ENCODE measurements at regions of chr3 and their contacts with region 1.

Region 1: GRCh38 chr3:157136647-157137387 is 23.1 kb downstream of the CCNL1 start:
- DNase-seq: no peak
- ATAC-seq: no peak
- H3K4me3 Mint-ChIP-seq: no peak overlapping the region
- H3K27ac Mint-ChIP-seq: peak overlapping the region; percentile 31
- H3K4me1 Mint-ChIP-seq: peaks cover 42% of the 10 kb centered on the region
- H3K27me3 Mint-ChIP-seq: no peaks in the 10 kb centered on the region
- CTCF ChIP-seq: no peak

Region 2: DNA sequence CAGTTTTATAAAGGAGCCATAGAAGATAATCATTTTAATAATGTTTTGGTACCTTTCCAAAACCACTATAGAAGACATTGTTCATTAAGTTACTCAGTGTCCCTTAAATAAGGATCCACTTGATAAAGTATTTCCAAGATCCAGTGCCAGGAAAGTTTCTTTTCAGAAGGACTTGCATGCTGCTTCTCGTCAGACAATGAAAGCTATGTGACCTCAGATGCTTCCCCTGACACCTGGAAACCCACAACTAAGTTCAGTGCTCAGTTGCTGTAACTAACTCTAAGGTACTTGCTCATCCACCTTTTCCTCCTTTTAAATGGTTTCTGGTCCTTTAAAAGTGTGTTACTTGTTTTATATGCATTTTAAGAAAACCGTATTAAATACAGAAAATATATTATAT is 589.2 kb before region 1 on chr3:
- CTCF ChIA-PET with region 1: interaction called, 18 read pairs
- POLR2A ChIA-PET with region 1: no interaction called
- intact Hi-C with region 1: no loop called
- DNase-seq: no peak
- ATAC-seq: no peak
- H3K4me3 Mint-ChIP-seq: no peak overlapping the region
- H3K27ac Mint-ChIP-seq: no peak overlapping the region
- H3K4me1 Mint-ChIP-seq: peaks cover 49% of the 10 kb centered on the region
- H3K27me3 Mint-ChIP-seq: no peaks in the 10 kb centered on the region
- CTCF ChIP-seq: no peak

Region 3: GRCh38 chr3:156792945-156793344 is 343.9 kb before region 1 on chr3:
- CTCF ChIA-PET with region 1: interaction called, 10 read pairs
- POLR2A ChIA-PET with region 1: no interaction called
- intact Hi-C with region 1: no loop called
- DNase-seq: peak; percentile 20
- ATAC-seq: peak; percentile 57
- H3K4me3 Mint-ChIP-seq: no peak overlapping the region
- H3K27ac Mint-ChIP-seq: peak overlapping the region; percentile 77
- H3K4me1 Mint-ChIP-seq: peaks cover 26% of the 10 kb centered on the region
- H3K27me3 Mint-ChIP-seq: no peaks in the 10 kb centered on the region
- CTCF ChIP-seq: no peak

Region 4: GRCh38 chr3:156943430-156943829 is 193.4 kb before region 1 on chr3:
- CTCF ChIA-PET with region 1: no interaction called
- POLR2A ChIA-PET with region 1: no interaction called
- intact Hi-C with region 1: no loop called
- DNase-seq: no peak
- ATAC-seq: no peak
- H3K4me3 Mint-ChIP-seq: no peak overlapping the region
- H3K27ac Mint-ChIP-seq: no peak overlapping the region
- H3K4me1 Mint-ChIP-seq: no peaks in the 10 kb centered on the region
- H3K27me3 Mint-ChIP-seq: peaks cover 14% of the 10 kb centered on the region
- CTCF ChIP-seq: no peak

Region 5: DNA sequence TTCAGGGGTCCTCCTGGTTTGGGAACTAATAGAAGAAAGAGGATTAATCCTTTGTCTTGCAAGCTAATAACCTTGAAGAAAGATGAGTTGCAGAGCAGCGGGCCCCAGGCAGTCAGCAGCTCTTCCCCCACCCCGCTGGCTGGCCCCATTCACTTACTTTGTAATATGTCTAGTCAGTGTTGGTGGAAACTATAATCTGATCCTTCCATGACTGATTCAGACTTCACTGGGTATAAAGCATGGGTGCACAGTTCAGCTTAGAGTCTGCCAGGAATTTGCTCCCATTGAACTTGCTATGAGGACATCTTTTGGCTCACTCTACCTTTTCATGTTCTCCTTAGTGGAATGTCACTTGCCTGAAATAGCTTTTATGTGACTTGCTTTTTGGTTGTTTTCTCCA is 94.6 kb before region 1 on chr3:
- CTCF ChIA-PET with region 1: no interaction called
- POLR2A ChIA-PET with region 1: no interaction called
- intact Hi-C with region 1: no loop called
- DNase-seq: no peak
- ATAC-seq: no peak
- H3K4me3 Mint-ChIP-seq: no peak overlapping the region
- H3K27ac Mint-ChIP-seq: no peak overlapping the region
- H3K4me1 Mint-ChIP-seq: no peaks in the 10 kb centered on the region
- H3K27me3 Mint-ChIP-seq: peaks cover 10% of the 10 kb centered on the region
- CTCF ChIP-seq: no peak

Region 6: DNA sequence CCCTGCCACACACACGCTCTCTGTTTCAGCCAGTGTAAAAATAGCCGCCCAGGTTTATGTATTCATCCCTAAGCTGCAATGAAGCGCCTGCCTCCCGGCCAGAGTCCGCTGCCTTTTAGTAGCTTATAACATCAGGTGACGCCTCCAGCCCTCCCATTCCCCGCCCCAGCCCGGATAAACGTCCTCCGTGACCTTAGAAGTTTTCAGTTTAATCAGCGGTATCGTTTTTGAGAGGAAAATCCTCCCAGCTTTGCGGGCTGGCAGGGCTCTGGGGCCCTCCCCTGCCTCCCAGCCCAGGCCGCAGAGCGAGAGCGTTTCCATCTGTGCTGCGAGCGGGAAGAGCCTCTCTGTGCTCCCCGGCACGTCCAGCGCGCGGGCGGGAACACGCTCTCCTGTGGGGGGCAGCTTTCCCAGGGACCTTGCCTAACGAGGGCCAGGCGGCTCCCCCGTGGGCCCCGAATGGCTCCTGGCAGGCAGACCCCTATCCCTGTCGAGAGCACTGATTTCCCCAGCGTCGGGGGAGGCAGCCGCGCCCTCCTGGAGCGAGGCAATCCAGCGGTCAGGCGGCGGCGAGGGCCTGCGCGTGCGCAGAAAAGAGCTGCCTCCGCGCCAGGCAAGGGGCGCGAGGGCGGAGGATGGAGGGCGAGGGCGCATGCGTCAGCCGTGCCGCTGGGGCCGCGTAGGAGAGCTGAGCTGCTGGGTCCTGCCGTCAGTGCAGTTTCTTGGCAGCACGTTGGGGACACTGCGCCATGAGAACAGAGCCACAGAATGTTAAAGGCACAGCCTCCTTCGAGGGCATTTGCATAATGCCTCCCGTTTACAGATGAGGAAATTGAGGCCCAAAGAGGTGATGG is 48.0 kb before region 1 on chr3:
- CTCF ChIA-PET with region 1: interaction called, 84 read pairs
- POLR2A ChIA-PET with region 1: interaction called, 5 read pairs
- intact Hi-C with region 1: loop called (anchors 2 kb)
- DNase-seq: peak; percentile 97
- ATAC-seq: peak; percentile 86
- H3K4me3 Mint-ChIP-seq: peak overlapping the region; percentile 74
- H3K27ac Mint-ChIP-seq: peak overlapping the region; percentile 96
- H3K4me1 Mint-ChIP-seq: peaks cover 64% of the 10 kb centered on the region
- H3K27me3 Mint-ChIP-seq: no peaks in the 10 kb centered on the region
- CTCF ChIP-seq: no peak

Region 7: DNA sequence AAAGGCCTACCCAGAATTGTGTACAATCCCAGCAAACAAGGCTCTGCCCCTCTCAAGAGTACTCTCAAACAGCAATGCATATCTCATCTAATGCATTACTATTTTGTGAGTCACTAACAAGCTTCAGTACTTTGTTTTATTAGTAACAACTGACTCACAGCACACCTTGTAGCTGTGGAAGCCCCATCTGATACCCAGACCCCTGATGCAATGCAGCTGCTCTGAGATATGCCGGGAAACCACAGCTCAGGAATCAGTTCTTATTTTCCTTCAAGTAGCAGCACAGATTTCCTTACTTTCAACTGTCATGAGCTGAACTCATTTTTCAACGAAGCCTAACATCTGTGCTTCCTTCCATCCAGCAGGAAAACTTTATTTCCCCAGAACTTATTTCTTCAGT is 14.7 kb before region 1 on chr3:
- CTCF ChIA-PET with region 1: interaction called, 53 read pairs
- POLR2A ChIA-PET with region 1: no interaction called
- intact Hi-C with region 1: no loop called
- DNase-seq: no peak
- ATAC-seq: peak; percentile 37
- H3K4me3 Mint-ChIP-seq: no peak overlapping the region
- H3K27ac Mint-ChIP-seq: no peak overlapping the region
- H3K4me1 Mint-ChIP-seq: peaks cover 24% of the 10 kb centered on the region
- H3K27me3 Mint-ChIP-seq: no peaks in the 10 kb centered on the region
- CTCF ChIP-seq: no peak

Region 8: DNA sequence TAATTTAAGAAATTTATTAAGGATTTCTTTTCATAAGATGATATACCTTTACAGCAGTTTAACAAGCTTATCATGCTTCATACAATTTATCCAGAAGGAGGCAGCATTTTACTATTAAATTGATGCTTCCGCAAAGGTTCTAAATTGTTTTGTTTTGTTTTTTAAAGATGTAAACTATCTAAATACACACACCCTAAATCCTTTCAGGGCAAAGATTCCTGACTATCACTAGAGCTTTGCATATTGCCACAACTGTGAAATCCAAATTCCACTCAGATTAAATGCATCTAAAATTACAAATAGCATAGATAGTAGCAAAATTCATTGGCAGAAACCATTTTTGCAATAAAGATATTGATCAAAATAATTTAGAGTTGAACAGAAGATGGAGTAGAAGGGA is 67.6 kb after region 1 on chr3:
- CTCF ChIA-PET with region 1: no interaction called
- POLR2A ChIA-PET with region 1: no interaction called
- intact Hi-C with region 1: no loop called
- DNase-seq: no peak
- ATAC-seq: no peak
- H3K4me3 Mint-ChIP-seq: no peak overlapping the region
- H3K27ac Mint-ChIP-seq: no peak overlapping the region
- H3K4me1 Mint-ChIP-seq: no peaks in the 10 kb centered on the region
- H3K27me3 Mint-ChIP-seq: no peaks in the 10 kb centered on the region
- CTCF ChIP-seq: no peak